Posterior vena cava (tissue), 2 donors: ENCODE measurements at regions of chr2 and their contacts with region 1.

Region 1: GRCh38 chr2:216807857-216808272 is 52.0 kb downstream of the TNP1 start:
- DNase-seq: no peak

Region 2: GRCh38 chr2:216830346-216830745 is 22.5 kb after region 1 on chr2:
- intact Hi-C with region 1: loop called in 1 of 2 experiments (anchors 1 kb)
- DNase-seq: no peak

Region 3: DNA sequence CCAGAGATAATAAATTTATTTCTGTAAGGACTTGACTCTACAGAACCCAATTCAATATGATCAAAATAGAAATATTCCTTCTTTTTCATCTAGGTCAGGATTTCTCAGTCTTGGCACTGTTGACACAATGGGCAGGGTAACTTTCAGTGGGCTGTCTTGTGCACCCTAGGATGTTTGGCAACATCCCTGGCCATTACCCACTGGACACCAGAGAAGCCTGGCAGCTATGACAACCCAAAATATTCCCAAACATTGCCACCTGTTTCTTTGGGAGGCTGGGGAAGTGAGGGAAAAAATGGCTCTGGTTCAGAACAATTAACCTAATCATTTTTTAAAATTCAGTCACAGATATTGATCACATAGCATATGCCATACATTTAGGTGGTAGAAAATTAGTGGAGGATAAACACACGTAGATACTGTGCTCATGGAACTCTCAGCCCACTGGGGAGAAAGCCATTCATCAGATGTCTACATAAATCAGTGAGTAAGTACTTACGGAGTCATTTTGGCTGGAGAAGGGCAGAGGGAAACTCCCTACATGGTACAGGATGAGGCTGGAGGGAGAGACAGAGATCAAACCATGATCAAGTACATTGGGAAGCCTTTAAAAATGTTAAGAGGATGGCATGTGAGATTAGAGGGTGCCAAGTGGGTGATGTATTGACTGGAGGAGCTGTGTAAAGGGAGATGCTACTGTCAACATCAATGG is 52.7 kb after region 1 on chr2:
- intact Hi-C with region 1: no loop called
- DNase-seq: no peak